ENCODE measurements at regions of chr3 and their contacts with region 1.

Region 1: DNA sequence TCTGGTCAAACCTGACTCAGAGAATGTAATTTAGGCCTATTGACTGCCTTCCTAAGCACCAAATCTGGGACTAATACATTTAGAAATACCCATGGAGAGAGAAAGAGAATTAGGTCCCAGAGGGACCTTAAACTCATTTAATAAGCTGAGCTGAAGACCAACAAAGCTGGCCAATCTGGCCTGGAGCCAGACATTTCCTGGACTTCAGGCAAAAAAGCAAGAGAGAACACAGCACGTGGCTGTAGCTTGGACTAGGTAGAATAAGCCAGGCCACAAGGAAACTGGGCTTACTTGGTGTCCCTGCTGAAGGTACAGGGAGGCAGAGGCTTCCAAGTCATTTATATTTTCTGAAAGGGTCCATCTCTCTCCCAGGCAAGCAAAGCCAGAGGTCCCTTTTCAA is 88.1 kb downstream of the RTP4 start:
- DNase-seq: peak; percentile 45
- H3K4me3 ChIP-seq: no peak overlapping the region
- CTCF ChIP-seq: no peak

Region 2: GRCh38 chr3:187352581-187353575 is 103.4 kb before region 1 on chr3:
- in situ Hi-C with region 1: no loop called
- DNase-seq: no peak
- H3K4me3 ChIP-seq: no peak overlapping the region
- CTCF ChIP-seq: no peak

Region 3: DNA sequence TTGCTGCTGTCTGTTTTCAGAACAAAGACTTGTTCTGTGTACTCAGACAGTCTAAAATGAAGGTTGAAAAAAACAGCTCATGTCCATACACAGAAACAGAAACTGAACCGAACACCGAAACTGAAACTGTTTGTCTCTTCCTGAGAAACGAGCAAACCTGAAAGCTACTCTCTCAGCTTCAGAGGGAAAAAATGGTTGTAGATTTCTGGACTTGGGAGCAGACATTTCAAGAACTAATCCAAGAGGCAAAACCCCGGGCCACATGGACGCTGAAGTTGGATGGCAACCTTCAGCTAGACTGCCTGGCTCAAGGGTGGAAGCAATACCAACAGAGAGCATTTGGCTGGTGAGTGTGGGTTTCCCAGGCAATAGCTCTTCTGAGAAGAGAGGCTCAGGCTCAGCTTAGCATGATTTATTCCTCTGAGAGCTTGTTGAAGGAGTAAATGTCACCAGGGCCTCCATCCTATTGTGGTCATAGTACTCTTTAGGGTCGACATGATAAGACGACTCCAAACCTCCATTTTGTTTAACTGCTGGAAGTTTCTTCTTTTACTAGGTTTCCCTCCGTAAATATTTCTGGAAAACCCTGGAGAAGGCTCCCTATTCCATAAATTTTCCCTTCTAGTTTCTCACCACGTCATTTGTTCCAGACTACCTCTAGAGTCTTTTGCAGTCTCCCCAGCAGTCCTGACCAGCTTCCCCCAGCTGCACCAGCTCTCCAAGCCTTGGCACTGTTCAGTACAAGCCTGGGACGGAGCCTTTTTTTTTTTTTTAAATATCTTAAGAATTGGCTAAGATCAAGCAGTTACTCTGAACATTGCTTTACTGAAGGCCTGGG is 87.8 kb before region 1 on chr3 and contains the start of gene RTP4:
- in situ Hi-C with region 1: loop called (anchors 10 kb)
- DNase-seq: peak; percentile 29
- H3K4me3 ChIP-seq: peak within 1 kb of the TSS; percentile 19
- CTCF ChIP-seq: no peak

Region 4: DNA sequence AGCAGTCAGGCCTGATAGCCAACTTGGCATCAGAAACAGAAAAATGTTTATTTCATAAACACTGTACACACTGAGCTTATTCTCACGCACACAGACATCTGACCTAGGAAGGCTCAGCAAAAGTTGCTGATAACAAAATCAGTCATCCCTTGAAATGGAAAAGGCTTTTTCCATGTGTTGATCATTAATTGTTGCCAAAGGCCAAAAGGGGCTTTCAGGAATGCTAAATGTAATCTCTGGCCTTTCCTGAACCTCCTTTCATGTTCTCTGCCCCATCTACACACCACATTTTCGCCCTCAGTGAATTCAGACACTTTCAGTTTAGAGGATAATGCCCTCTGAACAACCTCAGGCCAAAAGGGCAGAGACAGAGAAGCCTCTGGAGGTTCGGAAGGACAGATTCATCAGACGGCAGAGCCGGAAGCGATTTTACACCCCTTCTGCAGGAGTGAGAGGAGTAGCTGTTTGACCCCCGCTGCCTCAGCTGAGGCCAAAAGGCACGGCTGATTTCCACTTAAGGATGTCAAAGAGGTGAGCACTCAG is 73.6 kb before region 1 on chr3:
- in situ Hi-C with region 1: no loop called
- DNase-seq: no peak
- H3K4me3 ChIP-seq: no peak overlapping the region
- CTCF ChIP-seq: no peak

Region 5: GRCh38 chr3:187403768-187404270 is 52.4 kb before region 1 on chr3:
- in situ Hi-C with region 1: no loop called
- DNase-seq: peak; percentile 96
- H3K4me3 ChIP-seq: no peak overlapping the region
- CTCF ChIP-seq: no peak

Region 6: GRCh38 chr3:187490366-187490765 is 34.1 kb after region 1 on chr3:
- in situ Hi-C with region 1: loop called (anchors 5 kb)
- DNase-seq: peak; percentile 55
- H3K4me3 ChIP-seq: no peak overlapping the region
- CTCF ChIP-seq: no peak

Measured in astrocyte of the cerebellum (primary cell).